ENCODE measurements at regions of chr11 and their contacts with region 1.

Region 1: DNA sequence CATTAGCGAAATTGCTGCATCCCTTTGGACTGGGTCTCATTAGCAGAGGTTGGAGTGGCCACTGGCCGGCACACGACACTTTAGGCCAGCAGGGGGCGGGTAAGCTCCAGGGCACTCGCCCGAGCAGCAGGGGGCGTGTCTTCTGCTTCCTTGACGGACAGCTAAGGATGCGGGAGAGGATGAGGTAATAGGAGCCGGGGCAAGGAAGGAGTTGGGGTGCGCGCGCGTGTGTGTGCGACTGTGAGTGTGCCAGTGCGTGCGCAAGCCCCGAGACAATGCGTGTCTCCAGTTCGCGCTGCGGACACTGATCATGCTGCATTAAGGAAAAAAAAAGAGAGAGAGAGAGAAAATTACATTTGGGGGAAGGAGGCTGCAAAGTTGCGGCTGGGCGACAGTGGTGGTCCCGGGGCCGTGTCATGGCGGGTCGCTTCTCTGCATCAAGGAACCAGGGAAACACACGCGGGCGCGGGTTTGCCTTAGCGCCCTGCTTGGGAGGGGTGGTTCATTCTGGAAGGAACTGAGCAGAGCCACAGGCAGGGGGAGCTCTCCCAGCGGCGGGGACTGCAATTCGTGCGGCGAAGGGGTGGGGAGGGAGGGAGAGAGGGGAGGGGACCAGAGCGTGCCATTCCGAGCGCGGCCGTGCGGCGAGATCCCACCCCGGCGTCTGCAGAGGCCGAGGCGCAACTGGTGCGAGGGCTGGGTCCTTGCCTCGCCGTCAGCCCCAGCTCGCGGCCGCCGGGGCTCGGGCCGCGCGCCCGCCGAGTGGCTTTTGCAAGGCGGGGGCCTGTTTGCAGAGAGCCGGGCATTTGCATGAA is at the start of gene DTX4:
- H3K4me3 ChIP-seq: peak within 1 kb of the TSS; percentile 41
- H3K27ac ChIP-seq: no peak within 1 kb of the TSS; the same call in 1 of the 2 replicates
- H3K4me1 ChIP-seq: no peaks in the 10 kb centered on the region; the same call in 1 of the 2 replicates
- CTCF ChIP-seq: peak; percentile 90

Region 2: GRCh38 chr11:59011655-59012397 is 159.9 kb before region 1 on chr11:
- CTCF ChIA-PET with region 1: no interaction called
- POLR2A ChIA-PET with region 1: no interaction called
- H3K4me3 ChIP-seq: no peak overlapping the region
- H3K27ac ChIP-seq: no peak overlapping the region
- H3K4me1 ChIP-seq: no peaks in the 10 kb centered on the region
- CTCF ChIP-seq: no peak

Region 3: DNA sequence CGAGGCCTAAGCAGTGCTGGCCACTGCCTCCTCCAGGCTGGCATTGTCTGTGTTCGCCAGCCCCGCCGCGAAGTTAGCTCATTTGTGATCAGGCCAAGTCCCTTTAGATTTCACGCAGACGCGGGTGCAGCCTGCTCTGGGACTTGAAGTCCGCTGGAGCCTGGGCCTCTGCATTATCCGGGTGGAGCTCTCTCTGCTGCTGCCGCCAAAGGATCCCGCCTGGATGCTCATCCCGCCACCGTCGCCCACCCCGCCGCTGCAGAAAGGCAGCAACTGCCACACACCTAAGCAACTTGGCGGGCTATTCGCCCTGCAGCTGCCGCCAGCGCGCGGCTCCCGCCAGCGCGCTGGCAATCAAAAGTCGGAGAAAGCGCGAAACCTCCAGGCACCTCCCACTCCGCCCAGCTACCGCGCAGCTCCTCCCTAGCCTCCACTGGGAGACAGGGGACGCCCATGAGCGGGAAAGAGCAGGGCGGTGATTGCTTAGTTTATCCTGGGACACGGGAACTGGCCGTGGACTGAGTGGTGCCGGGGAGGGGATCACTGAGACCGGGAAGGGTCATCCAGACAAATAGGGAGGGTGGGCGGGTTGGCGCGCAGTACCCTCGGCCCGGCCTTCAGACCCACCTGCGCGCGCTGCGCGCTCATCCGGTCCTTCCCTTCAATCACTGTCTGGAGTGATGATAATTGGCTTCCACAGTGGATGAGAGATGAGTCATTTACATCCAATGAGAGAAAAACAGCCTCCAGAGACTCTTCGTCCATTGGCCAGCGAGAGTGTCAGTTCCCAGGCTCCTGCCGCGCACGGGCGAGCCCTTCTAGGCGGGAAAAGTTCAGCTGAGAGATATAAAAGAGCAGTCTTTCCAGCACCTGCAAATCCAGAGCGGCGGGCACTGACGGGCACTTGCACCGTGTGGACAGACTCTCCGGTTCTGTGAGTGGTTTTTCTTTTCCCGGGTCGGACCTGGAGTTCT is 65.1 kb before region 1 on chr11 and contains the start of gene FAM111B:
- CTCF ChIA-PET with region 1: no interaction called
- POLR2A ChIA-PET with region 1: interaction called, 11 read pairs
- H3K4me3 ChIP-seq: peak within 1 kb of the TSS; percentile 64
- H3K27ac ChIP-seq: peak within 1 kb of the TSS; percentile 81; the same call in 1 of the 2 replicates
- H3K4me1 ChIP-seq: no peaks in the 10 kb centered on the region
- CTCF ChIP-seq: no peak

Region 4: DNA sequence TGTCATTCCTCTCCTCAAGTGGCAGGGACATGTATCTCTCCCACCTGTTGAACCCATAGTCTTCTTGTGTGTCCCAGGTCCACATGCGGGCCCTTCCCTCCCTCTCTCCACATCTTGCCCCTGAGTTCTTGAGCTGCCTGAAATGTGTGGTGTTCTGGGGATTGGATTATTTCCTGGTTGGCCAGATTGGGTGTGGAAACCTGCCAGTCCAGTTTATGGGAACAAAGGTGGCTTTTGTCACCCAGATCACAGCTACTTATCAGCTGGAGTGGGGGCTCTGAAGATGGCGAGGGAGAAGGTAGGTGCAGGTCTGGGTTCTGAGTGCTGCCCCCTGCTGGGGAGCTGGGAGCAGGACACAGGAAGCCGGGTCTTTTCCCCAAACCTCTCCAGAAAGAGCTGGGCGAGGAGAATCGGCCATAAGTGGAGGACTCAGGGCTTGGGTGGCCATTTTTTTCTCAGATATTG is 14.4 kb after region 1 on chr11:
- CTCF ChIA-PET with region 1: interaction called, 78 read pairs
- POLR2A ChIA-PET with region 1: interaction called, 4 read pairs
- H3K4me3 ChIP-seq: no peak overlapping the region
- H3K27ac ChIP-seq: no peak overlapping the region
- H3K4me1 ChIP-seq: no peaks in the 10 kb centered on the region
- CTCF ChIP-seq: no peak

Region 5: GRCh38 chr11:59197991-59198390 is 26.3 kb after region 1 on chr11:
- CTCF ChIA-PET with region 1: interaction called, 17 read pairs
- POLR2A ChIA-PET with region 1: no interaction called
- H3K4me3 ChIP-seq: no peak overlapping the region
- H3K27ac ChIP-seq: no peak overlapping the region
- H3K4me1 ChIP-seq: no peaks in the 10 kb centered on the region
- CTCF ChIP-seq: no peak

Region 6: GRCh38 chr11:59207988-59208451 is 36.3 kb after region 1 on chr11:
- CTCF ChIA-PET with region 1: interaction called, 17 read pairs
- POLR2A ChIA-PET with region 1: interaction called, 4 read pairs
- H3K4me3 ChIP-seq: no peak overlapping the region
- H3K27ac ChIP-seq: no peak overlapping the region
- H3K4me1 ChIP-seq: no peaks in the 10 kb centered on the region
- CTCF ChIP-seq: peak; percentile 43; the same call in 1 of the 2 replicates

Region 7: GRCh38 chr11:59226396-59226795 is 54.7 kb after region 1 on chr11:
- CTCF ChIA-PET with region 1: no interaction called
- POLR2A ChIA-PET with region 1: no interaction called
- H3K4me3 ChIP-seq: no peak overlapping the region
- H3K27ac ChIP-seq: no peak overlapping the region
- H3K4me1 ChIP-seq: no peaks in the 10 kb centered on the region
- CTCF ChIP-seq: no peak

Region 8: DNA sequence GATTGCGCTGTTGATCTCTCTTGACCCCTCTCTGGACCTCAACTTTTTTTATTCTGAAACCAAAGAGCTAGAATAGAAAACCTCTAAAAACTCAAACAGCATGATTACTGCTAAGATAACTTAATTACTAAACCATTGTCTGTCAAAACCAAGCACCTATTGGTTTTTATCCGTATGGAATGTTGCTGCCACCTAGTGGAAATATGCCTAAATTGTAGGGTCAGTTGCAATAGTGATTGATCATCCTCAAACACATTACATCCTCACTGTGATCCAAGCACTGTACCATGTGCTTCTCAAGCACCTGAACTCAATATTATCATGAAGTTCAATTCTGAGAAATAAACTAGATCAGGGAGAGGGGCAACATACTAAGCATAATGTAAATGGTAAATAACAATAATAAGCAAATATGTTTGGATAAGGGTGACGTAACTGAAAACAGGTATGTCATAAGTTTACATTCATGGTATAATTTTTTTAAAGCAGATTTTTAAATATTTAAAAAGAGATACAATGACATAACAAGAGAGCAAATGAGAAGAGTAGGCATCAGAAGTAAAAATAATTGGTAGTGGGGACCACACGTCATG is 258.3 kb after region 1 on chr11:
- CTCF ChIA-PET with region 1: interaction called, 26 read pairs
- POLR2A ChIA-PET with region 1: no interaction called
- H3K4me3 ChIP-seq: no peak overlapping the region
- H3K27ac ChIP-seq: no peak overlapping the region
- H3K4me1 ChIP-seq: no peaks in the 10 kb centered on the region
- CTCF ChIP-seq: no peak

Region 9: DNA sequence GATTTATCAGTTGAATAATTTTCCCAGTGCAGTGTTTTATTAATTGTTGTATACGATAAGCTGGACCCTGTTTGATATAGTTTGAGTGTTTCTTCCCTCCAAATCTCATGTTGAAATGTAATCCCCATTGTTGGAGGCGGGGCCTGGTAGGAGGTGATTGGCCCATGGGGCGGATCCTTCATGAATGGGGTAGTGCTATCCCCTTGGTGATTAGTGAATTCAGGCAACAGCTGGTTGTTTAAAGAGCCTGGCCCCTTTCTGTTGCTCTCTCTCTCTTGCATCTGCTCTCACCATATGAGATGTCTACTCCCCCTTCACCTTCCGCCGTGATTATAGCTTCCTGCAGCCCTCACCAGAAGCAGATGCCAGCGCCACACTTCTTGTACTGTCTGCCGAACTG is 266.1 kb after region 1 on chr11:
- CTCF ChIA-PET with region 1: interaction called, 12 read pairs
- POLR2A ChIA-PET with region 1: no interaction called
- H3K4me3 ChIP-seq: no peak overlapping the region
- H3K27ac ChIP-seq: no peak overlapping the region
- H3K4me1 ChIP-seq: no peaks in the 10 kb centered on the region
- CTCF ChIP-seq: no peak

Measured in HEK293 (cell line).